Activated naive CD4-positive, alpha-beta T cell treated with anti-CD3 and anti-CD28 coated beads, Interleukin-2, amount 10 ng/mL, durations not matched to agents 7 days and 5 days (primary cell): ENCODE measurements at regions of chr5 and their contacts with region 1.

Region 1: GRCh38 chr5:137660349-137660817 is 75.5 kb downstream of the KLHL3 start:
- DNase-seq: peak; percentile 85
- H3K4me3 Mint-ChIP-seq: no peak overlapping the region
- H3K27ac Mint-ChIP-seq: no peak overlapping the region
- H3K4me1 Mint-ChIP-seq: peaks cover 22% of the 10 kb centered on the region
- H3K27me3 Mint-ChIP-seq: no peaks in the 10 kb centered on the region

Region 2: DNA sequence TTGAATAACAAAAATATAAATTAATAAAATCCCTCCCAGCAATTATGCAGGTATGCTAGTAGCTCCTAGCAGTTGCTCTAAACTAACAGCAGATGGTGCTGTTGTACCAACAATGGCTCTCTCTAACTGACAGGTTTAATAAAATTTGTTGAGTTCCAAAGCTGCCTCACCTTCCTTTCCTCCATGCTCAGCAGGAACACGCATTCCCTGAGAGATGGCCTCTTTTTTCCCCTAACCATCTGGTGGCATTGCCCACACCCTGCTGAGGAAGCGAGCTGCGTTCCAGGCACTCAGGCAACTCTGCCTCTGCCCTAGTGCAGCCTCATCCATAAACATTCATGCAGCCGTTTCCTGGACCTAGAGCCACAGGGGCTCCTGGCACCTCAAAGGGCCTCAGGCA is 30.7 kb before region 1 on chr5:
- CTCF ChIA-PET with region 1: interaction called, 31 read pairs
- DNase-seq: peak; percentile 29
- H3K4me3 Mint-ChIP-seq: no peak overlapping the region
- H3K27ac Mint-ChIP-seq: no peak overlapping the region
- H3K4me1 Mint-ChIP-seq: no peaks in the 10 kb centered on the region
- H3K27me3 Mint-ChIP-seq: no peaks in the 10 kb centered on the region

Region 3: DNA sequence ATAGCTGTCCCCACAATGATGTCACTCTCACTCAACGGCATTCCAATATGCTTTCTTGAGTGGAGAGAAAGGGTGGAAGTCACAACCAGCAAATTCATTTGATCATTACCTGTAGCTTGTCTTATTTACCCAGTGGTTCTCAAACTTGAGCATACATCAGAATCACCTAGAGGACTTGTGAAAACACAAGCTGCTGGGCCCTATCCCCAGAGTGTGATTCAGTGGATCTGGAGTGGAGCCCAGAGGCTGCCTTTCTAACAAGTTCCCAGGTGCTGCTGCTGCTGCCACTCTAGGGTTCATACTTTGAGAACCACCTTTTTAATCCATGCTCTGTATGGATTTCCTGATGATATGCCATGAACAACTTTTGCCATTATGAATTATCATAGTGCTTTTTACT is 19.2 kb before region 1 on chr5:
- CTCF ChIA-PET with region 1: interaction called, 17 read pairs
- DNase-seq: no peak
- H3K4me3 Mint-ChIP-seq: no peak overlapping the region
- H3K27ac Mint-ChIP-seq: peak overlapping the region; percentile 1
- H3K4me1 Mint-ChIP-seq: no peaks in the 10 kb centered on the region
- H3K27me3 Mint-ChIP-seq: no peaks in the 10 kb centered on the region

Region 4: DNA sequence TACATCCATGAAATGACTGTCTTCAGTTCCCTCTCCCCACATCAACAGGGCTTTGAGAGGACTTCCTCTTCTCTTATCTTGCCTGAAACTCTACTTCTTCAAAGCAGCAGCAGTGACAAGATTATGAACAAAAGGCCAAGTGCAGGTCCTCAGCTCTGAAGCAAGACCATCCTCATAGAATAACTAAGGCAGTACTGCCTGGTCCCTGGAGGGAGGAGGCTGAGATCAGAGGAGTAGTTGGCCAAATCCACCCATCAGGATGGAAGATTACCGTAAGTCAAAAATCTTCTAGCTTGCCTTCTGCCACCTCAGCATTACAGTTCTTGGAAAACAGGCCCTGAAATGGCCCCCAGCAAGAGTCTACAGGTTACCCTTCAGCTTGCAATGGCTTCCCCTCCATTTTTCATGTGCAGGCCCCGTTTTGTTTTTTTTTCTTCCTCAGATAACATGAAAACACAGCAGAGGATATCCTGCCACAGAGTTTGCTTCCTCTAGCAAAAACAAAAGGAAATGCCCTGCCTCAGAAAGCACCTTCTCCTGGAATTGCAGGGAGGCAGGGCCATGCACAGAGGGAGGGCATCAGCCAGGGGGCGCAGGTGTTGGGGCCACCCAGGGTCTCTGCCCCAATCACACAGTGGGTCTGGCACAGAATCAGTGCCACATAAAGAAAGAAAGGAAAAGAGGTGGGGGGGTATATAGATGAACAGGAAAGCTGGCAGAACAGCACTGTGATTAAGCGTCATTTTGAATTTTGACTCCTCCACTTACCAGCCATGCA is 35.5 kb after region 1 on chr5:
- CTCF ChIA-PET with region 1: interaction called, 12 read pairs
- DNase-seq: peak; percentile 62
- H3K4me3 Mint-ChIP-seq: peak overlapping the region; percentile 16
- H3K27ac Mint-ChIP-seq: peak overlapping the region; percentile 94
- H3K4me1 Mint-ChIP-seq: peaks cover 57% of the 10 kb centered on the region
- H3K27me3 Mint-ChIP-seq: no peaks in the 10 kb centered on the region